ENCODE measurements at regions of chr6 and their contacts with region 1.

Region 1: GRCh38 chr6:143745166-143746133 is 67.7 kb downstream of the PHACTR2 start:
- DNase-seq: peak; percentile 49

Region 2: GRCh38 chr6:143759666-143760065 is 14.2 kb after region 1 on chr6:
- CTCF ChIA-PET with region 1: no interaction called
- POLR2A ChIA-PET with region 1: no interaction called
- DNase-seq: no peak

Region 3: DNA sequence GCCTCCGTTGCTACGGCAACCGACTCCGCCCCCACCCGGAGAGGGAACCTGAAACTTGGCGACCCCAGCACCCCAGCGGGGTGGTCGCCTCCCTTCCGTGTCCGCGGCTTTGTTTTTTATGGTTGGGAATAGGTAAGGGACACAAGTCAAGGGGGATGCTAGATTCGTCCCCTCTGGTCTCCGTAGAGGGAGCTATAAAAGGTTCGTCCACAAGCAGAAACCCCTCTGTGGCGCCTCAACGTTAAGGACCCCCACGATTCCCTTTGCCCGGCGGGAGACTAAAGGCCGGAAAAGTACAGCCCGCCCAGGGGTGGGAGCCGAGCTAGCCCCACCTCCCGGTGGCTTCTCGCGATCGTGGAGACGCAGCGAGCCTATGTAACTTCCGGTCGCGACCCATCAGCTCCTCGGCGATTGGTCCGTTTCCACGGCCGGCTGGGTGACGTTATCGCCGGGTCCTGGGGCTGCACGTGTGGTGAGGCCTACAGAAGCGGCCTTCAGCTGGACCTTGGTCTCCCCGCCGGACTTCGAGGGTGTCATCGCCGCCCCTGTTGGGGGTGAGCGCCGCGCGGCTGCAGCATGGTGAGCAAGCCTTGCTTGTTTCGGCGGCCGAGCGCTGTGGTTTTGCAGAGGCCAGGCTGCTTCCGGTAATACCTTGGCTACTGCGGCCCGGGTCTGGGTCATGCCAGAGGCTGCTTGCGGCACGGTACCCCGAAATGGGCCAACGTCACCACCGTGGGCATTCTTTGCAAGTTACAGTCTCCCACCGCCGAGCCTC is 97.6 kb after region 1 on chr6 and contains the start of gene LTV1:
- CTCF ChIA-PET with region 1: no interaction called
- POLR2A ChIA-PET with region 1: interaction called, 16 read pairs
- DNase-seq: peak; percentile 99